Lower leg skin (tissue), 4 donors: ENCODE measurements at regions of chr20 and their contacts with region 1.

Region 1: GRCh38 chr20:62793912-62794724 is 2.2 kb upstream of the MRGBP start:
- DNase-seq: peak; percentile 94 to 99
- H3K4me3 ChIP-seq: peak overlapping the region; percentile 35
- CTCF ChIP-seq: no peak
- POLR2A ChIP-seq: peak in 1 of 2 donors; percentile 86

Region 2: GRCh38 chr20:62668441-62669027 is 125.6 kb before region 1 on chr20:
- intact Hi-C with region 1: loop called (anchors 5 kb)
- DNase-seq: peak in 1 of 2 donors; percentile 69
- H3K4me3 ChIP-seq: no peak overlapping the region
- CTCF ChIP-seq: peak in 1 of 3 donors; percentile 38
- POLR2A ChIP-seq: no peak